A549 (cell line): ENCODE measurements at regions of chr5 and their contacts with region 1.

Region 1: DNA sequence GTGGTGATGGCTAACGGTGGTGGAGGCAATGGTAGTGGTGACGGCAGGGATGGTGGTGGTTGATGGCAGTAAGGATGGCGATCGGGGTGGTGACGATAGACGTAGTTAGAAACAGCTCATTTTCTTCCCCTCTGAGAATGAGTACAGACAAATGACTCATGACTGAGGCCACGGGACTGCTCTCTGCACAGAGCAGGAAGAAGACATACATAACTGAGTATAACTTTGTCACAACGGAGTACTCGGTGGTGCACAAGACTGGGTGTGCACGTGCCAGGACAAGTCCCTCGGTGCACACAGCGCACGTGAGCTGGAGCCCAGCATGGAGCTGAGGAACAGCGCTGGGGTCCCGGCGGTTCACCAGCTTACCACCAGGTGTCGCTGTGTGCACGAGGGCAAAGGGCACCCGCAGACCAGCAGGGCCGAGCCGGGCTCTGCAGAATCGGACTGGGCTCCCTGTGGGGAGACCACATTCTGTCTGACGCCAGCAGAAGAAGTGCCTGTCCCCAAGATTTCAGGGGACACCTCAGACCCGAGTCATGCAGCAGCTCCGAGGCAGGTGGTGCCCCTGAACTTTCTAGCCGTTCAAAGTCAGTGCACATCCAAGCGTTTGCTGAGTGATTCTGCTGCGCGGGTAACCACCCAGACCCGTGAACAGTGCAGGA is 188.6 kb downstream of the FSTL4 start:
- DNase-seq: peak; percentile 53 to 75
- ATAC-seq: peak; percentile 90 to 96
- H3K4me3 ChIP-seq: no peak overlapping the region
- H3K27ac ChIP-seq: 0 out of 6 replicates have a peak overlapping the region, but pooled peaks of 1 of the 2 experiments have one; percentile 19
- H3K4me1 ChIP-seq: peaks cover 5% of the 10 kb centered on the region; the same call in 1 of the 3 replicates
- CTCF ChIP-seq: peak; percentile 92
- EP300 ChIP-seq: no peak
- POLR2A ChIP-seq: no peak
- RAD21 ChIP-seq: peak; percentile 78 to 87

Region 2: GRCh38 chr5:133111299-133111698 is 312.5 kb before region 1 on chr5:
- CTCF ChIA-PET with region 1: interaction called, 16 read pairs
- POLR2A ChIA-PET with region 1: no interaction called
- DNase-seq: peak; percentile 83 to 87
- ATAC-seq: peak; percentile 78 to 90
- H3K4me3 ChIP-seq: no peak overlapping the region
- H3K27ac ChIP-seq: peak overlapping the region; percentile 35 to 61; a peak in 4 of 6 replicates
- H3K4me1 ChIP-seq: peaks cover 13% of the 10 kb centered on the region; the same call in 2 of the 3 replicates
- CTCF ChIP-seq: peak; percentile 98
- EP300 ChIP-seq: no peak
- POLR2A ChIP-seq: no peak
- RAD21 ChIP-seq: peak; percentile 100

Region 3: GRCh38 chr5:133440467-133441115 is 16.8 kb after region 1 on chr5:
- CTCF ChIA-PET with region 1: interaction called, 42 read pairs
- POLR2A ChIA-PET with region 1: no interaction called
- DNase-seq: no peak
- ATAC-seq: peak in 1 of 2 experiments; percentile 16; a peak in 2 of 6 replicates
- H3K4me3 ChIP-seq: no peak overlapping the region
- H3K27ac ChIP-seq: no peak overlapping the region
- H3K4me1 ChIP-seq: no peaks in the 10 kb centered on the region
- CTCF ChIP-seq: no peak
- EP300 ChIP-seq: no peak
- POLR2A ChIP-seq: no peak
- RAD21 ChIP-seq: no peak

Region 4: DNA sequence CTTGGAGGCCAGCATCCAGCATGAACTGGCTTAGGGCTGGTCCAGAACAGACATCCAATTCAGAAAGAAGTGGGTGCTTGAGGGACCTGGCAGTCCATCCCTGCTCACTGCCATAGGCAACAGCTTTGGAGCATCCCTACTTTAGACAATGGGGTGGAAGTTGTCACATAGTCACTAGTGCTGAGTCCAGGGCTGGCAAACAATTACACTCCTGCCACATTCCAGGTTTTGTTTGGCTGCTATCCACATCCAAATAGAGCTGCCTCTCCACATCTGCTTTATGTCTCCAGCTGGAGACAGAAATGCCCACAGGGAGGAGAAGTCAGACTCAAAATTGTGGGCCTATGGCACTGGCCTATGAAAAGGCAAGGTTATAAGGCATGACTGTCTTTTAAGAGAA is 181.6 kb after region 1 on chr5:
- CTCF ChIA-PET with region 1: interaction called, 17 read pairs
- POLR2A ChIA-PET with region 1: no interaction called
- DNase-seq: no peak
- ATAC-seq: no peak
- H3K4me3 ChIP-seq: no peak overlapping the region
- H3K27ac ChIP-seq: no peak overlapping the region
- H3K4me1 ChIP-seq: no peaks in the 10 kb centered on the region
- CTCF ChIP-seq: no peak
- EP300 ChIP-seq: no peak
- POLR2A ChIP-seq: no peak
- RAD21 ChIP-seq: no peak

Region 5: DNA sequence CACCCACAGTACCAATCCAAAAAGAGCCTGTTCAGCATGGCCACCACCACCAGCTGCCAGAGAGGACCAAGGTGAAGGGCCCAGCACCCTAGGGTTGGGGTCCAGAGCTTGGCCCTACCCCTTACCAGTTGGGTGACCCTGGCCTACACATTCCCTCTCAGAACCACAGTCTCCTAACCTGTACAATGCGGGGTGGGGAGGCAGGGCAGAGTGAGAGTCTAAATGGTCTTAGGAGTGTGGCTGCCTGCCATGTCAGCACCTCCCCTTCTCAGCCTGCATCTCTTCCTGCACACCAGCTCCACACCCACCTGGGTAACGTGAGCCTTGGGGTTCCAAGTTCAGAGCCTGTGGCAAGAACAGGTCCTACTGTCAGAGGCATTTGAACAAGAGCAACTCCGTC is 452.5 kb after region 1 on chr5:
- CTCF ChIA-PET with region 1: interaction called, 74 read pairs
- POLR2A ChIA-PET with region 1: no interaction called
- DNase-seq: no peak
- ATAC-seq: no peak
- H3K4me3 ChIP-seq: no peak overlapping the region
- H3K27ac ChIP-seq: no peak overlapping the region
- H3K4me1 ChIP-seq: peaks cover 10% of the 10 kb centered on the region; the same call in 1 of the 3 replicates
- CTCF ChIP-seq: no peak
- EP300 ChIP-seq: no peak
- POLR2A ChIP-seq: no peak
- RAD21 ChIP-seq: no peak

Region 6: DNA sequence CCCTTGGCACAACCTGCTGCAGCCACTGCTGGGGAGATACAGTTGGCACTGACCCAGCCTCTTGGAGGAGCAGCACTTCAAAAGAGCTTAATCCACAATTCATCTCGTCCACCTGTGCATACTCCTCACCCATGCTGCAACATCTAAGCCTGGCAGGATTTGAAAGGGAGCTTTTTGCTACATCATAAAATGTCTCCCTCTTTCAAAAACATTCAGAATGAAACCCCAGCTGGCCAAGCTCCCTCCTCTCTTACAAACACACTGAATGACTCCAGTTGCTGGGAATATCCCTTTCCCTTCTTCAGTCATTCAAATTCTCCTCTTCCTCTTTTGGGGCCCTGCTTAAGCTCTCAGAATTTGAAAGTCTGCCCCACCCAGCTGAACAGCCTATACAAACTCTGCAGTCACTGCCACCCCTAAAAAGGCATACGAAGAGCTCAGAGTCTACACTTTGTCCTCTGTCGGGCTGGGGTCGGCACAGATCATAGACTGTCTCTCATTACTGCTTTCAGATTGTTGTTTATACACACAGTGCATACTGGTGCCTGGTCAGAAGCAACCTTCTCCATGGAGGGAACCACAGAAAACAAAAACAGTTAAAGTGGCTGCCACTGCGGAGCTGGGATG is 553.5 kb after region 1 on chr5:
- CTCF ChIA-PET with region 1: interaction called, 11 read pairs
- POLR2A ChIA-PET with region 1: no interaction called
- DNase-seq: no peak
- ATAC-seq: peak in 1 of 2 experiments; percentile 7; a peak in 2 of 6 replicates
- H3K4me3 ChIP-seq: no peak overlapping the region
- H3K27ac ChIP-seq: peak overlapping the region; percentile 70 to 82; a peak in 5 of 6 replicates
- H3K4me1 ChIP-seq: peaks cover 27% of the 10 kb centered on the region
- CTCF ChIP-seq: no peak
- EP300 ChIP-seq: no peak
- POLR2A ChIP-seq: no peak
- RAD21 ChIP-seq: no peak